ENCODE measurements at regions of chr22 and their contacts with region 1.

Region 1: GRCh38 chr22:37316875-37317371 is 34.6 kb downstream of the CYTH4 start:
- DNase-seq: peak; percentile 81
- H3K4me3 Mint-ChIP-seq: no peak overlapping the region
- H3K27ac Mint-ChIP-seq: no peak overlapping the region
- H3K4me1 Mint-ChIP-seq: peaks cover 41% of the 10 kb centered on the region
- H3K27me3 Mint-ChIP-seq: peaks cover 51% of the 10 kb centered on the region

Region 2: GRCh38 chr22:37457093-37457893 is 140.4 kb after region 1 on chr22:
- CTCF ChIA-PET with region 1: interaction called, 74 read pairs
- DNase-seq: peak; percentile 92
- H3K4me3 Mint-ChIP-seq: no peak overlapping the region
- H3K27ac Mint-ChIP-seq: no peak overlapping the region
- H3K4me1 Mint-ChIP-seq: no peaks in the 10 kb centered on the region
- H3K27me3 Mint-ChIP-seq: peaks cover 9% of the 10 kb centered on the region